ENCODE measurements at regions of chr1 and their contacts with region 1.

Region 1: GRCh38 chr1:160675641-160676410 is 29.0 kb upstream of the SLAMF1 start:
- DNase-seq: peak; percentile 79
- H3K4me3 Mint-ChIP-seq: peak overlapping the region; percentile 28
- H3K27ac Mint-ChIP-seq: no peak overlapping the region
- H3K4me1 Mint-ChIP-seq: peaks cover 28% of the 10 kb centered on the region
- H3K27me3 Mint-ChIP-seq: no peaks in the 10 kb centered on the region

Region 2: DNA sequence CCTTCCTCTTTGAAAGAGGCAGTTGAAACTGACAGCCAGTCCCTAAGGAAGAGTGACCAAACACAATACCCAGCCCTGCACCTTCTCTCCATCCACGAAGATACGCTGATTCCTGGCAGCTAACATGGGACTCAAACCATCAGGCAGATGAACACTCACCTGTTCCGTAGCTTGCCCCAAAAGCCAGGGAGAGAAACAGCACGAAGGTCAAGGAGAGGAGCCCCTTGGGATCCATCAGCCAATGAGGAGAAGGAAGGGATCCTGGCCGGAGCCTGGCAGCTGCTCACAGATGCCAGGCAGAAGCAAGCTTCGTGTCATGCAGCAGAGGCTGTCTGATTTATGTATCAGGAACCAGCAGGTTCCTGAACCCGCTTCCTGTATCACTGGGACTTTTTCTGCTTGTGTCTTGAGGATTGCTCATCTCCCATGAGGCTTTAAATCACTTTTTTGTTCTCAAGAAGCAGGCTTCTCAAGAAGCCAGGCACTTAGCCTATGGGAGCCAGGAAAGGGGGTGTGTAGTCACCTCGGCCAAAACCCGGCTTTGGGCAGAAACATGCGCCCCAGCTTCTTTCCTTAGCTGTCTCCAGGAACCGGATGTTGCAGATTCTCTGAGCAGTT is 29.0 kb before region 1 on chr1 and contains the start of gene SLAMF1:
- CTCF ChIA-PET with region 1: interaction called, 16 read pairs
- POLR2A ChIA-PET with region 1: interaction called, 7 read pairs
- DNase-seq: peak; percentile 48
- H3K4me3 Mint-ChIP-seq: peak within 1 kb of the TSS; percentile 93
- H3K27ac Mint-ChIP-seq: peak within 1 kb of the TSS; percentile 93
- H3K4me1 Mint-ChIP-seq: peaks cover 66% of the 10 kb centered on the region
- H3K27me3 Mint-ChIP-seq: no peaks in the 10 kb centered on the region
- total RNA-seq, gene SLAMF1: 70.4 to 70.6 TPM

Region 3: DNA sequence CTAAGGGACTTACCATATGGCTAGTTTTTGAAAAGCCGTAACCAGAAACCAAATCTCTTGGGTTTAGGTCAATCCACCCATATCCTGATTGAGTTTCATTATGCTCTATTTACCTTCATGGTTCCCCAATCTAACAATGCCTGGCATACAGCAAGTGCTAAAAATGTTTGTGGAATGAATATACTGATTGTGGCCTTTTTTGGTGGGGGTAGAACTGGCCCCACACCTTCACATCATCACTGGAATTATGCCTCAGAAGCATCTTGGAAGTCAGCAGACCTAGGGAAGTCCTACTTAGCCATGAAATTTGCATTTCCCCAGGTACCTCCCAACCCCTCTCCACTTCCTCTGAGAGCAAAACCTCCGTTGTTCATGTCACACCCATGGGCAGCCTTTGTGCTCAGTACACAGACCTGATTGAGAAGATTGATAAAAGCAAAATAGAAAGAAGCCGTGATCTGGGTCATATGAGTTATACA is 11.2 kb before region 1 on chr1:
- CTCF ChIA-PET with region 1: interaction called, 28 read pairs
- POLR2A ChIA-PET with region 1: no interaction called
- DNase-seq: peak; percentile 66
- H3K4me3 Mint-ChIP-seq: peak overlapping the region; percentile 55
- H3K27ac Mint-ChIP-seq: peak overlapping the region; percentile 91
- H3K4me1 Mint-ChIP-seq: peaks cover 68% of the 10 kb centered on the region
- H3K27me3 Mint-ChIP-seq: no peaks in the 10 kb centered on the region

Measured in activated CD4-positive, alpha-beta T cell treated with anti-CD3 and anti-CD28 coated beads, Interleukin-2, amount 10 ng/mL, durations not matched to agents 7 days and 5 days (primary cell).